B cell (primary cell): ENCODE measurements at regions of chr1 and their contacts with region 1.

Region 1: DNA sequence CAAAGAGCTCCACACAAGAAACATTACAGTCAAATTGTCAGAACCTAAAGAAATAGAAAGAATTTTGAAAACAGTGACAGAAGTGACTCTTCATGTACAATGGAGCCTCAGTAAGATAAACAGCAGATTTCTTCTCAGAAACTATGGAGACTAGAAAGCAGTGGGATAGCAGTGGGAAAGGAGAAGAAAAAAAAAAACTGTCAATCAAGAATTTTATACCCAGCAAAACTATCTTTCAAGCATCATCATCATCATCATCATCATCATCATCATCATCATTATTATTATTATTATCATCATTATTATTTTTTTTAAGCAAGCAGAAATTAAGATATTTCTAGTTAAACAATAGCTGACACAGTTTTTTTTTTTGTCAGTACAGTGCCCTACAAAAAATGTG is 24.2 kb downstream of the CEP170 start:
- DNase-seq: peak; percentile 27
- ATAC-seq: peak; percentile 21
- H3K4me3 ChIP-seq: no peak overlapping the region
- H3K4me3 Mint-ChIP-seq: no peak overlapping the region
- H3K27ac ChIP-seq: no peak overlapping the region
- H3K27ac Mint-ChIP-seq: no peak overlapping the region
- H3K4me1 ChIP-seq: peaks cover 0 to under 1% of the 10 kb centered on the region in 2 donors
- H3K4me1 Mint-ChIP-seq: peaks cover 21% of the 10 kb centered on the region
- H3K27me3 ChIP-seq: no peaks in the 10 kb centered on the region
- H3K27me3 Mint-ChIP-seq: no peaks in the 10 kb centered on the region
- CTCF ChIP-seq: no peak

Region 2: GRCh38 chr1:243267914-243268653 is 37.2 kb after region 1 on chr1:
- CTCF ChIA-PET with region 1: no interaction called
- POLR2A ChIA-PET with region 1: interaction called, 7 read pairs
- intact Hi-C with region 1: loop called (anchors 5 kb)
- DNase-seq: peak; percentile 40
- ATAC-seq: peak; percentile 52
- H3K4me3 ChIP-seq: peak overlapping the region in 1 of 5 experiments; percentile 35
- H3K4me3 Mint-ChIP-seq: peak overlapping the region; percentile 75
- H3K27ac ChIP-seq: peak overlapping the region in 1 of 2 donors; percentile 61
- H3K27ac Mint-ChIP-seq: peak overlapping the region; percentile 62
- H3K4me1 ChIP-seq: peaks cover 31 to 34% of the 10 kb centered on the region in 2 donors
- H3K4me1 Mint-ChIP-seq: peaks cover 44% of the 10 kb centered on the region
- H3K27me3 ChIP-seq: no peaks in the 10 kb centered on the region
- H3K27me3 Mint-ChIP-seq: no peaks in the 10 kb centered on the region
- CTCF ChIP-seq: no peak